ENCODE measurements at regions of chr17 and their contacts with region 1.

Region 1: GRCh38 chr17:17591355-17592298 is at the start of gene PEMT:
- DNase-seq: peak; percentile 88
- ATAC-seq: peak; percentile 94
- H3K4me3 Mint-ChIP-seq: peak within 1 kb of the TSS; percentile 90
- H3K27ac Mint-ChIP-seq: peak within 1 kb of the TSS; percentile 84
- H3K4me1 Mint-ChIP-seq: peaks cover 15% of the 10 kb centered on the region
- H3K27me3 Mint-ChIP-seq: no peaks in the 10 kb centered on the region
- CTCF ChIP-seq: no peak
- total RNA-seq, gene PEMT: 11.4 and 12.2 TPM in 2 replicates

Region 2: DNA sequence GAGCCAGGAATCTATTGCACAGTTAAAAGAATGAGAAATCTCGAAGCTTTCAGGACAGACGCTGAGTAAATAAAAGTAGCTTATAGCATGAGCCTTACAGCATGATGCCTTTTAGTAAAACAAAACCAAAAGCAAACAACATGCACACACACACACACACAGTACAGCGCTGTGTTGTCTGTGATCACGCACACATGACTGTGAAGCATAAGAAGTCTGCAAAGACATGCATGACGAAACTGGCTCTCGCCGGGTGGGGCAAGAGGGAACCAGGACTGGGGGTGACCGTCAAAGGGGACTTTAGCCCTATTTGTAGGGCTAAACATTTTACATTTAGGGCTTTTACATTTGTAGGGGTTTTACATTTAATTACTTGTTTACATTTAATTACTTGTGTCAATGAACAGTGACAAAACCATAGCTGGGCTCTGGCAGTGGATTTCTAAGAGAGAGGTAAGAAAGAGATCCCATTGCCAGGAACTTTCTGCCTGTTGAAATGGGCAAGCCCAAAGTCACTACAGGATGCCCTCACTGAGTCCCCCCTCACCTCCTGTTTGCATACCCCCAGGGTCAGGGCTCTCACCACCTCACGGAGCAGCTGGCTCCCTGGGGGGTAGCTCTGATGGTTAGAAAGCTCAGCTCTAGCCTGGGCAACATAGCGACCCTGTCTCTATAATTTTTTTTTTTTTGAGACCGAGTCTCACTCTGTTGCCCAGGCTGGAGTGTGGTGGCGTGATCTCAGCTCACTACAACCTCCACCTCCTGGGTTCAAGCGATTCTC is 617.7 kb before region 1 on chr17:
- CTCF ChIA-PET with region 1: no interaction called
- POLR2A ChIA-PET with region 1: no interaction called
- intact Hi-C with region 1: loop called (anchors 5 kb)
- DNase-seq: peak; percentile 48
- ATAC-seq: peak; percentile 39
- H3K4me3 Mint-ChIP-seq: peak overlapping the region; percentile 91
- H3K27ac Mint-ChIP-seq: peak overlapping the region; percentile 94
- H3K4me1 Mint-ChIP-seq: peaks cover 96% of the 10 kb centered on the region
- H3K27me3 Mint-ChIP-seq: no peaks in the 10 kb centered on the region
- CTCF ChIP-seq: no peak

Region 3: GRCh38 chr17:17280613-17281549 is 310.7 kb before region 1 on chr17 and contains the start of gene COPS3:
- CTCF ChIA-PET with region 1: no interaction called
- POLR2A ChIA-PET with region 1: no interaction called
- intact Hi-C with region 1: loop called (anchors 1 kb)
- DNase-seq: peak; percentile 95
- ATAC-seq: peak; percentile 87
- H3K4me3 Mint-ChIP-seq: peak within 1 kb of the TSS; percentile 80
- H3K27ac Mint-ChIP-seq: peak within 1 kb of the TSS; percentile 89
- H3K4me1 Mint-ChIP-seq: peaks cover 42% of the 10 kb centered on the region
- H3K27me3 Mint-ChIP-seq: no peaks in the 10 kb centered on the region
- CTCF ChIP-seq: no peak
- total RNA-seq, gene COPS3: 71.6 and 73.7 TPM in 2 replicates

Region 4: DNA sequence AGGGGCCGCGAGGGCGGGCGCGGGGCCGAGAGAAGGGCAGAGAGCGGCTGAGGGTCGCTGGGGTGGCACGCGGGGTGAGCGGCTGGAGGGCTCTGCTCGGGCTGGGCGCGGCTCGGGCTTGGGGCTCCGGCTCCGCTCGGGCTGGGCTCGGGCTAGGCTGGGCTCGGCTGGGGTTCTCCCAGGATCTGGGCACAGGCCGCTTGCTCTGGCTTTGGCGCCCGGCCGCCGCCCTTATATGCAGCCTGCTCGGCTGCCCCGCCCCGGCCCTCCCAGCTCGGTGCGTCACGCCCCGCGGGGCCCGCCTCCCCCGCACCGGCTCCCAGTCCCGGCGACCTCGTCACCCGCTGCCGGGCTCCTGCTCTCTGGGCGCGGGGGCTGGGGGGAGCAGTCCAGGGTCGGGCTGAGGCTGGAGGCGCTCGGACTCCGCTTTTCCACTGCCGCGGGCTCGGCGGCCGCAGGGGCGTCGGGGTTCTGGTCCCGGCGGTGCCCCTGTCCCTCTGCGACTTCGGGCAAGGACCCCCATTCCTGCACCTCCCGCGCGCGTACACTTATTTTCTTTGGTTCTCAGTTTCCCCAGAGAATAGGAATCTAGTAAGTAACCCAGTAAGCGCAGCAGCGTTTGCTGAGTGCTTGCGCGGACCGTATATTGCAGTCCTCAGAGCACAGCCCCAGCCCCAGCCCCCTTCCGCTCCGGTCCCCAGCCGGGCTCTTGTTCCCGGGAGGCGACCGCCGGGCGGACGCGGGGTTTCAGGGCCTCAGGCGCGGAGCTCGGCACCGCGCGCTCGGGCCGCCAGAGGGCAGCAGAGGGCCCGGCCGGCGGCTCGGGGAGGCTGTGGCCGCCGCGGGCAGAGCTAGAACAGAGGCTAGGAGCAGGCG is 95.2 kb before region 1 on chr17 and contains the start of gene RASD1:
- CTCF ChIA-PET with region 1: interaction called, 4 read pairs
- POLR2A ChIA-PET with region 1: interaction called, 6 read pairs
- intact Hi-C with region 1: loop called (anchors 1 kb)
- DNase-seq: peak; percentile 81
- ATAC-seq: peak; percentile 88
- H3K4me3 Mint-ChIP-seq: peak within 1 kb of the TSS; percentile 80
- H3K27ac Mint-ChIP-seq: no peak within 1 kb of the TSS
- H3K4me1 Mint-ChIP-seq: peaks cover 17% of the 10 kb centered on the region
- H3K27me3 Mint-ChIP-seq: peaks cover 8% of the 10 kb centered on the region
- CTCF ChIP-seq: peak; percentile 67
- total RNA-seq, gene RASD1: 0.86 and 1.0 TPM in 2 replicates

Region 5: DNA sequence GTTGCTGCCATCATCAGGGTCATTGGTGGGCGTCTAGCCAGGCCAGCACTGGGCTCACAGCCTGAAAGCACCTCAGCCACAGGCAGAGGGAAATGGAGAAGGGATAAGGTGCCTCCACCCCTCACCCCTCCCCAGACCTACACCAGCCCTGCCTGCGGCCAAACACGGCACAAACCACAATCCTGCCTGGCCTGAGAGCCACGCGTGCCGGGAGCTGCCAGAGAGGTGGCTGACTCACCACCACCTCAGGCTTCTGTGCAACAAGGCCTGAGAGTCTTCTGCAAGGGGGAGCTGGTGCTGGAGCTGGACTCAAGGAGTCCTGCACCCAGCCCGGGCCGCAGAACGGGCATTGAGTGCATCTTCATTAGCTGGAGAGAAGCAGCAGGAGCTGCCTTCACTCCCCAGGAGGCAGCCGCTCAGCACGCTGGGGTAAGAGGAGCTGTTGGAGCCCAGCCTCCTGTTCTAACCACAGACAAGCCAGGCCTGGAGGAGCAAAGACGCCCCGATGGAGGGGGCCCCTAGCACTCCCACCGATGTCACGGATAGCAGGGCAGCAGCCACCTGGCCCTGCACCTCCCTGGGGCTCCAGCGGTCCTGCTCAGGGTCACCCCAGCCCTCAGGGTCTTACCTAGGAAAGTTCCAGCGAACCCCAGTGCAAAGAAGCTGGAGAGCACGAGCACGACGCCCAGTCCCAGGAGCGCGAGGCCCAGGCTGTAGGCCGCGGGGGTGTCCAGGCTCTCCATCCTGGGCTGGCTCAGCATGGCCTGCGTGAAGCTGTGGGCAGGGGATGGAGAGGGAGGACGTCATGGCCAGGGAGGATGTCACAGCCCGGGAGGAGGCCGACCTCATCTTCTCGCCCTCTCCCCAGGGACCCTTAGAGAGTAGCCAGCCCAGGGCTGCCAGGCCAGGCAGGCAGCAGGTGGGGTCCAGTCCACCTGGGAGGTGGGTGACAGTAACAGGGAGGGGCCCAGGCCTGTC is 79.5 kb before region 1 on chr17:
- CTCF ChIA-PET with region 1: no interaction called
- POLR2A ChIA-PET with region 1: no interaction called
- intact Hi-C with region 1: no loop called
- DNase-seq: no peak
- ATAC-seq: no peak
- H3K4me3 Mint-ChIP-seq: no peak overlapping the region
- H3K27ac Mint-ChIP-seq: no peak overlapping the region
- H3K4me1 Mint-ChIP-seq: no peaks in the 10 kb centered on the region
- H3K27me3 Mint-ChIP-seq: no peaks in the 10 kb centered on the region
- CTCF ChIP-seq: no peak

Region 6: GRCh38 chr17:17694169-17695081 is 102.8 kb after region 1 on chr17:
- CTCF ChIA-PET with region 1: no interaction called
- POLR2A ChIA-PET with region 1: no interaction called
- intact Hi-C with region 1: loop called (anchors 1 kb)
- DNase-seq: peak; percentile 81
- ATAC-seq: peak; percentile 70
- H3K4me3 Mint-ChIP-seq: peak overlapping the region; percentile 86
- H3K27ac Mint-ChIP-seq: peak overlapping the region; percentile 96
- H3K4me1 Mint-ChIP-seq: peaks cover 54% of the 10 kb centered on the region
- H3K27me3 Mint-ChIP-seq: no peaks in the 10 kb centered on the region
- CTCF ChIP-seq: no peak

Region 7: GRCh38 chr17:17972126-17972951 is 380.7 kb after region 1 on chr17 and contains the starts of genes DRC3 and TOM1L2:
- CTCF ChIA-PET with region 1: no interaction called
- POLR2A ChIA-PET with region 1: interaction called, 3 read pairs
- intact Hi-C with region 1: loop called (anchors 1 kb)
- DNase-seq: peak; percentile 97
- ATAC-seq: peak; percentile 91
- H3K4me3 Mint-ChIP-seq: peak within 1 kb of the TSS; percentile 94
- H3K27ac Mint-ChIP-seq: peak within 1 kb of the TSS; percentile 87
- H3K4me1 Mint-ChIP-seq: peaks cover 22% of the 10 kb centered on the region
- H3K27me3 Mint-ChIP-seq: no peaks in the 10 kb centered on the region
- CTCF ChIP-seq: no peak
- total RNA-seq, gene DRC3: not detected in 2 replicates
- total RNA-seq, gene TOM1L2: 15.2 and 18.3 TPM in 2 replicates

Region 8: DNA sequence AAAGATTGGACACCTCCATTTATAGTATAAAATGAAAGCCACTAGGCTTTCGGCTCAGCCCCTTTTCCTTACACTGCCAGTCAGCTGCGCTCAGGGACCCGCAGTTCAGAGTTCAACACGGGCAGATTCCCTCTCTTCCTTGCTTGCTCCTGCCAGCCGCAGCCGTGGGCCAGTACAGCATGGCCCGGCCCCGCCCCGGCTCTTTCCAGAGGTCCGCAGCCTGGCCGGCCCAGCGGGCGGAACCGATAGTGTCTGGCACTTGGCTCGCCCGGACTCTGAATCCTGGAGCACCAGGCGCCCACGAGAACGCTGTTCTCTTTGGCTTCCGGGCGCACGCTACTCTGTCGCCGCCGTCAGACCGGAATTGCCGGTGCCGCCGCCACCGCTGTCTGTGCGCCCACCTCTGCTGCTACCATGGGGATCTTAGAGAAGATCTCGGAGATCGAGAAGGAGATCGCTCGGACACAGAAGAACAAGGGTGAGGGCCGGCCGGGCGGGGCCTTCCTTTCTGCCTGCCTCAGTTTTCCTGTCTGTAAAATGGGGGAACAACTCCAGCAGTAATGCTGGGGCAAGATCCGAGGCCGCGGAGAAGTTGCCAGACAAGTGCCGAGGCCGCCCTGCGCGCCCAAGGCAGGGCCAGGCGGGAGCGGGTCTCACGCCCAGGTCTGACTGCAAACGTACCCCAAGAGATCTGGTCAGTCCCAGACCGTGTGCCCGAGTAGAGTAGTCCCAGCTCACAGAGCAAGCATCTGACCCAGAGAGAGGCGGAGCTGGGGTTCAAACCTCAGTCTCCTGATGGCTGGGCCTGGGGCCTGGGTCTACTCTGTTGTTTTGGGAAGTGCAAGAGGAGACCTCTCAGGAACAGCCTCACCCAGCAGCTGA is 496.2 kb after region 1 on chr17 and contains the start of gene DRG2:
- CTCF ChIA-PET with region 1: no interaction called
- POLR2A ChIA-PET with region 1: no interaction called
- intact Hi-C with region 1: loop called (anchors 1 kb)
- DNase-seq: peak; percentile 93
- ATAC-seq: peak; percentile 95
- H3K4me3 Mint-ChIP-seq: peak within 1 kb of the TSS; percentile 99
- H3K27ac Mint-ChIP-seq: peak within 1 kb of the TSS; percentile 95
- H3K4me1 Mint-ChIP-seq: peaks cover 26% of the 10 kb centered on the region
- H3K27me3 Mint-ChIP-seq: no peaks in the 10 kb centered on the region
- CTCF ChIP-seq: no peak
- total RNA-seq, gene DRG2: 55.7 and 67.1 TPM in 2 replicates

Measured in activated B cell treated with CpG ODN at 0.5 μM for 24 hours (primary cell).